SK-N-SH (cell line): ENCODE measurements at regions of chr22 and their contacts with region 1.

Region 1: DNA sequence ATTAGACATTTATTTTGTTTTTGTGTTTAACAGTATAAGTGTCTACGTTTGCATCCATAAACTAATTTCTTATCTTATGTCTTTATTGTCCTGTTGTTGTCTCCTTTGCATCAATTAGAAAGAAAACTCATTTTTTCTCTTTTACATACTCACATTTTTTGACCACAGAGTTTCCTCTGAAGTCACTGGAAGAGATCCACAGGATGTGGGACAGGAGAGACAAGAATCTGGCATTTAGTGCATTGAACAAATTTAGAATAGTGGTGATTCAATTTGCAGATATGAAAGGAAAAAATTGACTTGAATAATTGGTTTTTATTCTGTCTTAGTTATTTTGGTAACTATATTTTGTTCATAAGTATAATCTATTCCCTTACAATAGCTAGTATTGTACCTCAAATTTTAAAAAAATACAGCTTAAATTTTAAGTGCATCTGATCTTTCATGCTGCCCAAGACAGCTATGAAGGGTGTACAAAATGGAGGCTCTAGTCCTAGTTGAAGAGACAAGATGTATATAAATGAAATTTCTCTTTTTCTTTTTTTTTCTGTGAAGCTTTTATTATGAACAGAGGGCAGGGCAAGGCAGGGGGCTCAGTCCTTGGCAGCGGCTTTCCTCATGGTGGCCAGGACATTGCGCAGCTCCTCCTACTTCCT is 24.4 kb downstream of the HORMAD2 start:
- DNase-seq: no peak
- H3K4me3 ChIP-seq: no peak overlapping the region
- H3K27ac ChIP-seq: peak overlapping the region in 1 of 2 experiments; percentile 27; a peak in 1 of 4 replicates
- H3K4me1 ChIP-seq: peaks cover 0 to 11% of the 10 kb centered on the region in 2 experiments; a peak in 1 of 4 replicates
- H3K27me3 ChIP-seq: no peaks in the 10 kb centered on the region
- CTCF ChIP-seq: no peak
- EP300 ChIP-seq: no peak
- RAD21 ChIP-seq: no peak

Region 2: DNA sequence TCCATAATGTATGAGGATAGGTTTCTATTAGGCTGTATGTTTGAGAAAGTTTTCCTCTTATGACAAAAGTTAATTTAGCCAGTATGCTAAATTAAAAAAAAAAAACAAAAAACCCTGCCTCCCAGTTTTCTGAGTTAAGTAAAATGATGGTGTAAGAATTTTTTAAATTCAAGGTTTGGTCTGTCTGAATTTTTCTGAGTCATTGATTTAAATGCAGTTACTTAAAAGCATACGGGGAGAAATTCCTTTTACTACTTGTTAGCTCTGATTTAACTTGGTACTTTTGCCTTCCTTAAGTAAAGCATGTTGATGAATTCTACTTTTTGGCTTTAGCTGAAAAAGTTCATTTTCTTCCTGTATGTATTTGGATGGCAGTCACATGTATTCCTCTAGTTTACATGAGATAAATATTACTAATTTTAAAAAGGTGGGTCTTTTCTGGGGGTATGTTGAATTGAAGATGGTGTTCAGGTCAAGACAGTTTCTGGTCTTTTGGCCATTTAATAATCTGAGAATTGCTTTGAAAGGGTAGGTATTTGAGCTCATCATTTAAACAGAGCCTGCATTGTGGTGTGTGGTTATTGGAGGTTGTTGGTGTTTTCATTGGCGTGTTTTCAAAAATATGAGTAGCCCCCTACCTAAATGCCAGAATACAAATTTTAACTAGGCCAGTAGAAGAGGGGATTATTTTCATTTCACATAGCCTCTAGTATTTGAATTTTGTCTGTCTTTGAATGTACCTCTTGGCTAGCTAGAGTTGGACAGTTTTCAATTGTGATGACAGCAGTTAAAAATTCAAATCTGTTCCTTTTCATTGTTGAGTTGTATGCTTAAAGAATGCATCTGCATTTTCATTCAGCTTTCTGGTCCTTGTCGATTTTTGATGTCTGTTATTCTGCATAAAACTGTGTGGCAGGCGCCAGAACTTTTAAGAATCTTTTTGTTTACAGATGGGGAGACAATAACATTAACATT is 156.9 kb before region 1 on chr22:
- CTCF ChIA-PET with region 1: no interaction called
- POLR2A ChIA-PET with region 1: no interaction called
- DNase-seq: peak; percentile 12
- H3K4me3 ChIP-seq: no peak overlapping the region
- H3K27ac ChIP-seq: peak overlapping the region; percentile 58 to 81; a peak in 3 of 4 replicates
- H3K4me1 ChIP-seq: peaks cover 6 to 32% of the 10 kb centered on the region in 2 experiments
- H3K27me3 ChIP-seq: no peaks in the 10 kb centered on the region
- CTCF ChIP-seq: no peak
- EP300 ChIP-seq: no peak; a peak in 1 of 4 replicates
- RAD21 ChIP-seq: no peak

Region 3: GRCh38 chr22:30116362-30117117 is 11.9 kb after region 1 on chr22:
- CTCF ChIA-PET with region 1: interaction called, 26 read pairs
- POLR2A ChIA-PET with region 1: no interaction called
- DNase-seq: no peak
- H3K4me3 ChIP-seq: no peak overlapping the region
- H3K27ac ChIP-seq: no peak overlapping the region
- H3K4me1 ChIP-seq: no peaks in the 10 kb centered on the region; a peak in 2 of 4 replicates
- H3K27me3 ChIP-seq: no peaks in the 10 kb centered on the region
- CTCF ChIP-seq: no peak
- EP300 ChIP-seq: no peak
- RAD21 ChIP-seq: no peak

Region 4: DNA sequence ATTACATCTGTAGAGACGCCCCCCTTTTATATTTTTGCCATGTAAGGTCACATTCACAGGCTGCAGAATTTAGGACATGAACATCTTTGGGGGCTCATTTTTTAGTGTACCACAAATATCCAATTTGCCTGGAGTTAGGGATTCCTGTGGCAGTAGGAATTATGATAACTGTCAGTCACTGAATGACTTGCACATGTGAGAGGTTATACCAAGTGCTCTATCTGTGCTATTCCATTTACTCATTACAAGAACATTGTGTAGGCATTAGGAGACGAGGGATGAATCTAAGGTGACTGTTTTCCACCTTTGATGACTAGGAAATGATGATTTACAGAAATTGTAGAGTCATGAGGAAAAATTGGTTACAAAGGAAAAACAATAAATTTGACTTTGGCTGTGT is 62.7 kb after region 1 on chr22:
- CTCF ChIA-PET with region 1: no interaction called
- POLR2A ChIA-PET with region 1: no interaction called
- DNase-seq: no peak
- H3K4me3 ChIP-seq: no peak overlapping the region
- H3K27ac ChIP-seq: no peak overlapping the region
- H3K4me1 ChIP-seq: no peaks in the 10 kb centered on the region; a peak in 2 of 4 replicates
- H3K27me3 ChIP-seq: no peaks in the 10 kb centered on the region
- CTCF ChIP-seq: no peak
- EP300 ChIP-seq: no peak
- RAD21 ChIP-seq: no peak

Region 5: GRCh38 chr22:30182350-30182745 is 77.7 kb after region 1 on chr22:
- CTCF ChIA-PET with region 1: interaction called, 12 read pairs
- POLR2A ChIA-PET with region 1: no interaction called
- DNase-seq: no peak
- H3K4me3 ChIP-seq: no peak overlapping the region
- H3K27ac ChIP-seq: no peak overlapping the region
- H3K4me1 ChIP-seq: peaks cover 0 to 5% of the 10 kb centered on the region in 2 experiments; a peak in 2 of 4 replicates
- H3K27me3 ChIP-seq: no peaks in the 10 kb centered on the region
- CTCF ChIP-seq: no peak
- EP300 ChIP-seq: no peak
- RAD21 ChIP-seq: no peak

Region 6: DNA sequence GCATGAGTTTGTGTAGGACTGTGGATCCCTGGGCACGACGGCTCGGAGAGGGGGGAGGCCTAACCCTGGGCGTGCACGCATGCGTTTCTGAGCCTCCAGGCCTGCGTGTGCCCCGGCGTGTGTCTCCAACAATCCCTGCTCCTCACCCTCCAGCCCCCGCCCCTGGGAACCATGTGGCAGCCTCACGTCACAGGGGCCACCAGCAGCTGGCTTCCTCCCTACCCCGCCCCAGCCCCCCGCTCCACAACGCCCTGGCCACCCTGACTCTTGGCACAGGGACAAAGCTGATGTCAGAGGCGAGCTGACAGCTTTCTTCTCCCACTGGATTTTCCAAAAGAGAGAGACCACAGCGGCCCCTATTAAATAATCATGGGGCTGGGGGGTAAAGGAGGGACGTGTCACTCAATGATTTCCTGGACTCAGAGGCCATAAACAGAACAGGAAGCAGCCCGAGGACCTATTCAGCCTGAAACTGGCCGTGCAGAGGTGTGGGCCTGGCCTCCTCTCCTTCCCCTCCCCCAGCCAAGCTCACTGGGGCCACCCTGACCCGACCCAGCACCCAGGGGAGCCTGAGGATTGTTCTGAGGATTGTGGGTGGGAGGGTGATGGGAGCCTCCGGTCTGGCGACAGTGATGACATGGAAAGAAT is 148.7 kb after region 1 on chr22:
- CTCF ChIA-PET with region 1: interaction called, 65 read pairs
- POLR2A ChIA-PET with region 1: no interaction called
- DNase-seq: peak; percentile 84
- H3K4me3 ChIP-seq: no peak overlapping the region
- H3K27ac ChIP-seq: peak overlapping the region in 1 of 2 experiments; percentile 63; a peak in 2 of 4 replicates
- H3K4me1 ChIP-seq: peaks cover 29 to 40% of the 10 kb centered on the region in 2 experiments
- H3K27me3 ChIP-seq: no peaks in the 10 kb centered on the region
- CTCF ChIP-seq: no peak
- EP300 ChIP-seq: no peak
- RAD21 ChIP-seq: no peak

Region 7: DNA sequence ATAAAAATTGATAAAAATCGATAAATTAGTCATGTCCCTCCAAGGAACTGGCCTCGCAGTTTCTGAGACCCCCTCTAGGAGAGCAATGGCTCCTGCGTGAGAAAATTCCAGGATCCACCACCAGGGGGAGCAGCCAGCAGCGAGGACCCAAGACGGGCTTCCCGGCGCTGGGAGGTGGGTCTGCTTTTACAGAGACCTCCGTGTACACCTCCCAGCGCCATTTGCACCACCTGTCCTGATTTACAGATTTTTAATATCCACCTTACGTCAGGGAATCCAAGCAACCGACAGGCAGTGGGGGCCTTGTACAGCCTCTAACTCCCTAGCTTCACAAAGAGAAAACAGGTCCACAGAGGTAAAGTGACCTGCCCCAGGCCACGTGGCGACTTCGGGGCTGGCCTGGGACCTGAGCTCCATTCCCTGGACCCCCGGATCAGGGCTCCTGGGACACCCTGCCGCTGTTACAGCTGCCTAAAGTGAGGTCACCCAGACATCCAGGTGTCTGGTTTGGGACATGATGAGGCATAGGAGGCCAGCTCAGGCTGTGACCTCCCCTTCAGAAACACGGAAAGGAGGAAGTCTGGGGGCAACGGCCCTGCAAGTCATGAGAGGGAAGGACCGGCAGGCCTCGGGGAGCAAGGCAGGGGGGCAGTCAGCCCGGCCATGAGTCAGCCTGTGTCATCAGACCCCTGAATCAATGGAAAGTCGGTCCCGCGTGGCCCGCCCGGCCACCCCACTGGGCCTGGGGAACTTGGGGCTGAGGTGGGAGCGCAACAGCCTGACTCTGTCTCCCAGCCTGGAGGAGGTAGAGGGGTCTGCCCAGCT is 158.5 kb after region 1 on chr22:
- CTCF ChIA-PET with region 1: interaction called, 25 read pairs
- POLR2A ChIA-PET with region 1: no interaction called
- DNase-seq: peak; percentile 92
- H3K4me3 ChIP-seq: peak overlapping the region in 1 of 2 experiments; percentile 43; a peak in 1 of 4 replicates
- H3K27ac ChIP-seq: no peak overlapping the region
- H3K4me1 ChIP-seq: peaks cover 3 to 5% of the 10 kb centered on the region in 2 experiments; a peak in 2 of 4 replicates
- H3K27me3 ChIP-seq: no peaks in the 10 kb centered on the region
- CTCF ChIP-seq: peak; percentile 96
- EP300 ChIP-seq: no peak
- RAD21 ChIP-seq: peak; percentile 68

Region 8: GRCh38 chr22:30277547-30278344 is 173.1 kb after region 1 on chr22:
- CTCF ChIA-PET with region 1: interaction called, 10 read pairs
- POLR2A ChIA-PET with region 1: no interaction called
- DNase-seq: no peak
- H3K4me3 ChIP-seq: no peak overlapping the region
- H3K27ac ChIP-seq: peak overlapping the region in 1 of 2 experiments; percentile 70; a peak in 2 of 4 replicates
- H3K4me1 ChIP-seq: peaks cover 0 to 14% of the 10 kb centered on the region in 2 experiments; a peak in 2 of 4 replicates
- H3K27me3 ChIP-seq: no peaks in the 10 kb centered on the region
- CTCF ChIP-seq: no peak
- EP300 ChIP-seq: no peak
- RAD21 ChIP-seq: no peak

Region 9: DNA sequence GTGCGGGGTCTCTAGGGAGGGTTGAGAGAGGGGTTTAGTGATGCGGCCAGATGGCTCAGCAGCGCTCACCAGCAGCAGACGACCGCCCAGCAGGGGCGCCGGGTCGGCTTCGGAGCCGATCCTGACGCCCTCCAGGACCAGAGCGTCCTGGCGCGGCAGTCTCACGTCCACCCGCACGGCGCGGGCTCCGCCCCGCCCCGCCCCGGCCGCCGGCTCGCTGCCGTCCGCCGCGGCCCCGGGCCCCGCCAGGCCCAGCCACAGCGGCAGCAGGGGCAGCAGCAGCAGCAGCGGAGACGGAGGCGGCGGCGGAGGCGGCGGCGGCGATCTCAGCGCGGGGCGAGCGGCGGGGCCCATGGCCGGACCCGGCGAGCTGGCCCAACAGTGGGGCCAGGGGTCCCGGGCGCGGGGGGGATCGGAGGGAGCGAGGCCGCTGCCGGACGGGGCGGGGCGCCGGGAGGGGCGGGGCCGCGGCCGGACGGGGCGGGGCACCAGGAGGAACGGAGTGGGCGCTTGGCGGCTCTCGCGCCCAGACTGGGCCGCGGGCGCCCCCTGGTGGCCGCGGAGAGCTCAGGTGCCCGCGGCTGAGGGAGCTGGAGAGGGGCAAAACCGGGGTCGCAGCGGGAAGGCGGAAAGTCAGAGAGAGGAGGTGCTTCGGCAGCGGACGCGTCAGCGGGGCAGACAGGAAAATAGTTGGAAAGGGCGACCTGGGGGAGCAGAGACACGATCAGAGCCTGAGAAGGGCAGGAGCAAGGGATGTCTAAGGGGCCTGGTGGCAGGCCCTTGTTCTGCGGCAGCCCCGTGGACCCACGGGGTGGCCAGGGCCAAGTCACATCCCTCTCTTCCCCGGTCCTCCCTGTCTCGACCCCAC is 282.6 kb after region 1 on chr22 and contains the start of gene RNF215:
- CTCF ChIA-PET with region 1: interaction called, 12 read pairs
- POLR2A ChIA-PET with region 1: no interaction called
- DNase-seq: peak; percentile 99
- H3K4me3 ChIP-seq: peak within 1 kb of the TSS; percentile 61 to 82
- H3K27ac ChIP-seq: peak within 1 kb of the TSS in 1 of 2 experiments; percentile 76; a peak in 2 of 4 replicates
- H3K4me1 ChIP-seq: peaks cover 4 to 12% of the 10 kb centered on the region in 2 experiments; a peak in 3 of 4 replicates
- H3K27me3 ChIP-seq: no peaks in the 10 kb centered on the region
- CTCF ChIP-seq: peak; percentile 85
- EP300 ChIP-seq: no peak
- RAD21 ChIP-seq: peak; percentile 80
- polyA plus RNA-seq, gene RNF215: 28.6 and 37.2 TPM in 2 replicates